ENCODE measurements at regions of chr7 and their contacts with region 1.

Region 1: DNA sequence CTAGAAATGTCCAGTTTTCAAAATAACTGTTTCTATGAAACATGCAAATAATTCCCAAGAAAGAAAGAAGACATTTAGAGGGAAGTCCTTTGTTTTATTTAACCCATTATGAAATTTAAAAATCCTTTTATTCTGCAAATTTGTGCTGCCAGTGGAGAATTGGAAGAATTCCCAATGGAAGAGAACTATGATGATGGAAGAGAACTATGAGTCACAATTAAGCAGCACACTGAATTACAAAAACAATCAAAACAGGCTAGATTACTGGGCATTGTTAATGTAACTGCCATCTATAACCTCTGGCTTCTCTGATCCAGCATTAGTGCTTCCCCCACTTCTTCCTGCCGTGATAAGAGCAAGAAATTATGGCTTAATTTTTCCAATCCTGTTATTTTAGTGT is 126.2 kb upstream of the FEZF1 start:
- DNase-seq: no peak
- H3K4me3 ChIP-seq: no peak overlapping the region
- H3K27ac ChIP-seq: no peak overlapping the region
- H3K4me1 ChIP-seq: peaks cover 0 to 8% of the 10 kb centered on the region in 2 donors
- H3K27me3 ChIP-seq: no peaks in the 10 kb centered on the region
- CTCF ChIP-seq: no peak
- POLR2A ChIP-seq: no peak

Region 2: GRCh38 chr7:122300211-122300932 is 130.3 kb before region 1 on chr7:
- intact Hi-C with region 1: no loop called
- DNase-seq: no peak
- H3K4me3 ChIP-seq: peak overlapping the region in 1 of 4 donors; percentile 9
- H3K27ac ChIP-seq: no peak overlapping the region
- H3K4me1 ChIP-seq: peaks cover 2 to 28% of the 10 kb centered on the region in 2 donors
- H3K27me3 ChIP-seq: peaks cover 84% of the 10 kb centered on the region
- CTCF ChIP-seq: no peak
- POLR2A ChIP-seq: no peak

Region 3: GRCh38 chr7:122337011-122337410 is 93.7 kb before region 1 on chr7:
- intact Hi-C with region 1: no loop called
- DNase-seq: no peak
- H3K4me3 ChIP-seq: no peak overlapping the region
- H3K27ac ChIP-seq: no peak overlapping the region
- H3K4me1 ChIP-seq: no peaks in the 10 kb centered on the region
- H3K27me3 ChIP-seq: no peaks in the 10 kb centered on the region
- CTCF ChIP-seq: no peak
- POLR2A ChIP-seq: no peak

Region 4: DNA sequence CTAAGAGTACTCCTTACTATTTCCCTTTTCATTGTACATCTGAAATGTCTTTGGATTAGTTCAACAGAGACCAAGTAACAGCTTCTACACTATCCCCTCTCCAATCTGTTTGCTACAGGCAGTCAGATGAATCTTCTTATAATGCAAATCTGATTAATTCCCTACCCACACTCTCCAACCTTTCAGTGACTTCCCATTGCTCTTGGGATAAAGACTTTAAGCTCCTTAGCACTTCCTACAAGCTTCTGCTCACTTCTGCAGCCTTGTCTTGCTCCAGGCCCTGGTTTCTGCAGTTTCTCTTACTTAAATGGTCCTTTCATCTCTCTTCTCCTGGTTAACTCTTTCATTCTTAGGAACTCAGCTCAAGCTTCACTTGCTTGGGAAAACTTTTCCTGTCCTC is 61.0 kb before region 1 on chr7:
- intact Hi-C with region 1: loop called in 1 of 2 experiments (anchors 10 kb)
- DNase-seq: no peak
- H3K4me3 ChIP-seq: no peak overlapping the region
- H3K27ac ChIP-seq: no peak overlapping the region
- H3K4me1 ChIP-seq: no peaks in the 10 kb centered on the region
- H3K27me3 ChIP-seq: no peaks in the 10 kb centered on the region
- CTCF ChIP-seq: no peak
- POLR2A ChIP-seq: no peak

Measured in adrenal gland (tissue), 19 donors.